ENCODE measurements at regions of chr1 and their contacts with region 1.

Region 1: GRCh38 chr1:151281969-151282882 is at the start of gene ZNF687:
- DNase-seq: peak; percentile 94 to 100 (median 97)
- ATAC-seq: peak; percentile 85
- H3K4me3 ChIP-seq: peak within 1 kb of the TSS; percentile 64
- H3K4me3 Mint-ChIP-seq: peak within 1 kb of the TSS; percentile 98
- H3K27ac ChIP-seq: peak within 1 kb of the TSS; percentile 92 to 95
- H3K27ac Mint-ChIP-seq: peak within 1 kb of the TSS; percentile 93
- H3K4me1 ChIP-seq: peaks cover 38% of the 10 kb centered on the region
- H3K4me1 Mint-ChIP-seq: peaks cover 42% of the 10 kb centered on the region
- H3K27me3 ChIP-seq: no peaks in the 10 kb centered on the region
- H3K27me3 Mint-ChIP-seq: no peaks in the 10 kb centered on the region
- CTCF ChIP-seq: no peak
- total RNA-seq, gene ZNF687: 38.9 to 40.0 TPM

Region 2: DNA sequence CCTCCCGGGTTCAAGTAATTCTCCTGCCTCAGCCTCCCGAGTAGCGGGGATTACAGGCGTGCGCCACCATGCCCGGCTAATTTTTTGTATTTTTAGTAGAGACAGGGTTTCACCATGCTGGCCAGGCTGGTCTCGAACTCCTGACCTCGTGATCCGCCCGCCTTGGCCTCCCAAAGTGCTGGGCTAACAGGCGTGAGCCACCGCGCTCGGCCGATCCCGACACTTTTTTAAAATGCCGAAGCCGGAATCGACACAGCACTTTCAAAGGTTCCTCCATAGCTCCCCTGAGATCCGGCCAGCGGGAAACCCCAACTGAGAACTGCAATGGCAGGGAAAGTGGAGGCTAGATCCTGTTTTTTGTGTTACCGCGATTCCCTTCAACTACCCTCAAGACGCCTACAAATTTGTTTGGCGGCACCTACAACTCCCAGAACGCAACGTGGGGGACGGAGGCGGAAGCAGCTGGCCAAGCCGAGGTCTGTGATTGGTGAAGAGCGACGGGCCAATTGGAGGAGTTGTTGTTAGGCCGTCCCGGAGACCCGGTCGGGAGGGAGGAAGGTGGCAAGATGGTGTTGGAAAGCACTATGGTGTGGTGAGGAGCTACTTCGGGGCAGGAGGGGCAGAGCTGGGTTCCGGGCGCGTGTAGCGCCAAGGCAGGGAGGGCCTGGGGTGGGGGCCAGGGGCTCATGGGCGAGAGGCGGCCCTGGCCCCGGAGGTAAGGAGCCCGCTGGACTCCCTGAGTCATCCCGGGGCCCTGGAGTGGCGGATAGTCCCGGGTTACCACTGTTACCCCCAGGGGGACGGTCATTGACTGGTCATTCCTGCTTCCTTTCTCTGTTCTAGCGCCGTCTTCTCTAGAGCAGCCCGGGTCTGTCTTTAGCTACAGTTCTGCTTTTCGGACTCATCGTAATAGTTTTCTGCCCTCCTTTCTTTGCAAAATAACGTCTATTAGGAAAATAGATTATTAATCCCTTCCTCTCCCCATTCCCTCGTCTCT is 27.7 kb before region 1 on chr1 and contains the start of gene PSMD4:
- CTCF ChIA-PET with region 1: interaction called, 8 read pairs
- POLR2A ChIA-PET with region 1: interaction called, 30 read pairs
- intact Hi-C with region 1: loop called in 1 of 2 experiments (anchors 1 kb)
- DNase-seq: peak; percentile 88 to 98 (median 92)
- ATAC-seq: peak; percentile 93
- H3K4me3 ChIP-seq: peak within 1 kb of the TSS; percentile 87
- H3K4me3 Mint-ChIP-seq: peak within 1 kb of the TSS; percentile 98
- H3K27ac ChIP-seq: peak within 1 kb of the TSS; percentile 55 to 67
- H3K27ac Mint-ChIP-seq: peak within 1 kb of the TSS; percentile 94
- H3K4me1 ChIP-seq: peaks cover 21% of the 10 kb centered on the region
- H3K4me1 Mint-ChIP-seq: peaks cover 36% of the 10 kb centered on the region
- H3K27me3 ChIP-seq: no peaks in the 10 kb centered on the region
- H3K27me3 Mint-ChIP-seq: peaks cover 4% of the 10 kb centered on the region
- CTCF ChIP-seq: no peak
- total RNA-seq, gene PSMD4: 57.2 TPM

Region 3: GRCh38 chr1:151327223-151327902 is 45.1 kb after region 1 on chr1 and contains the start of gene PI4KB:
- CTCF ChIA-PET with region 1: interaction called, 4 read pairs
- POLR2A ChIA-PET with region 1: interaction called, 54 read pairs
- intact Hi-C with region 1: loop called (anchors 1 to 5 kb)
- DNase-seq: peak; percentile 76 to 97 (median 85)
- ATAC-seq: peak; percentile 94
- H3K4me3 ChIP-seq: peak within 1 kb of the TSS; percentile 75
- H3K4me3 Mint-ChIP-seq: peak within 1 kb of the TSS; percentile 95
- H3K27ac ChIP-seq: peak within 1 kb of the TSS; percentile 84 to 96
- H3K27ac Mint-ChIP-seq: peak within 1 kb of the TSS; percentile 93
- H3K4me1 ChIP-seq: peaks cover 35% of the 10 kb centered on the region
- H3K4me1 Mint-ChIP-seq: peaks cover 33% of the 10 kb centered on the region
- H3K27me3 ChIP-seq: no peaks in the 10 kb centered on the region
- H3K27me3 Mint-ChIP-seq: no peaks in the 10 kb centered on the region
- CTCF ChIP-seq: no peak
- total RNA-seq, gene PI4KB: 50.2 to 51.0 TPM

Region 4: DNA sequence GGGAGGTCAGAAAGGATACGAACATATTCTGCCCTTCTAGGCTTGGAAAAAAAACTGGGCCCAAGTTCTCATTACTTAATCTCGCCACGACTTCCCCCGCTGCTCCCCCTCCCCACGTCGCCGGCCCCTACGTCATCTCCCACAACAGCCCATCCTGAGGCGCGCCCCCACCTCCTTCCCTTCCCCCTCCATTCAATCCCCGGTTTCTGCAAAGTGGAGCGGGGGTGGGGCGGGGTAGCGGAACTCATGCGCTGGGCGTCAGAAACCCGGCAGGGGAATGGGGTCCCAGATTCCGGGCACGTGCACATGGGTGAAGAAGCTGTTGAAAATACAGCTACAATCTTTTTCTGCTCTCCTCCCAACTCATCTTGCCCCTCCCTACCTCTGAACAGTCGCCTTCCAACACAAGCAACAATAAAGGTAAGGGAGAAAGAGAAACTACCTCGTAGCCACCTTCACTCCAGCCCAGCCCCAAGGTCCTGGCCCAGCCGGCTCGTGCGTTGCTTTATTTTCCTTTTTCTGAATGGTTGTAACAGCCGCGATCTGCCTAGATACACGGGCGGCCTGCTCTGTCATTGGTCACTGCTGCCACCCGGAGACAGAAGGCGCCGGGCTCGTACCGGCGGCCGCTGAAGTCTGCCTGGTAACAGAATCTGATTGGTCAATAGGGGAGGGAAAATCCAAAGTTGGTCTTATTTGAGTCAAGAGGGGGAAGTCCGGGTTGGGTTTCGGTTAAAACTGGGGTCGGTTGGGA is 64.7 kb after region 1 on chr1 and contains the start of gene RFX5:
- CTCF ChIA-PET with region 1: interaction called, 21 read pairs
- POLR2A ChIA-PET with region 1: interaction called, 11 read pairs
- intact Hi-C with region 1: no loop called
- DNase-seq: peak; percentile 85 to 99 (median 90)
- ATAC-seq: peak; percentile 93
- H3K4me3 ChIP-seq: peak within 1 kb of the TSS; percentile 81
- H3K4me3 Mint-ChIP-seq: peak within 1 kb of the TSS; percentile 94
- H3K27ac ChIP-seq: peak within 1 kb of the TSS; percentile 97 to 98
- H3K27ac Mint-ChIP-seq: peak within 1 kb of the TSS; percentile 94
- H3K4me1 ChIP-seq: peaks cover 33% of the 10 kb centered on the region
- H3K4me1 Mint-ChIP-seq: peaks cover 30% of the 10 kb centered on the region
- H3K27me3 ChIP-seq: no peaks in the 10 kb centered on the region
- H3K27me3 Mint-ChIP-seq: no peaks in the 10 kb centered on the region
- CTCF ChIP-seq: no peak
- total RNA-seq, gene RFX5: 62.0 to 65.7 TPM

Region 5: DNA sequence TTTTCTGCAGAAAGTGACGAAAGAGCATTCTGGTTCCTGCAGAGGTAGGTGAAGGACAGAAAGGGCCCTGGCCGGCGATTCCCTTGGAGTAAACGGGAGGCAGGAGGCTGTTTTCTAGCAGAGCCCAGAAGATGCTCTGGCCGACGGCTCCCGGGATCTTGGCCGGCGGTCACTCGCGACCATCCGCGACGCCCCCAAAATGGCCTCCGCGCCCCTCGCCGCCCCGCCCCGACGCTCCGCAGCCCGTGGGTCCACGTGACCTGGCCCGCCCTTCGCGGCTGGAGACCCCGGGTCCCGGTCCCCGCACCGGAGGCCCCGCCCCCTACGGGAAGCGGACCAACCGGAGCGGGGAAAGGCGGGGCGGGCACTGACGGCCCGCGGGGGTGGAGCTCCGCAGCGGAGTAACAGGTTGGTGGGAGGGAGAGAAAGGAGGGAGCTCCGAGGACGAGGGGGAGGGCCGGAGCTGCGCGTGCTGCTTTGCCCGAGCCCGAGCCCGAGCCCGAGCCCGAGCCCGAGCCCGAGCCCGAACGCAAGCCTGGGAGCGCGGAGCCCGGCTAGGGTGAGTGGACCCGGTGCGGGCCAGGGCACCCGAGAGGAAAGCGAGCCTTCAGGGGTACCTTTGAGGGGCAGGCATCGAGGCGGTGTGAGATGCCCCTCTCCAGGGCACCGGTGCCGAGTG is 228.9 kb after region 1 on chr1 and contains the start of gene CGN:
- CTCF ChIA-PET with region 1: no interaction called
- POLR2A ChIA-PET with region 1: no interaction called
- intact Hi-C with region 1: loop called in 1 of 2 experiments (anchors 2 kb)
- DNase-seq: peak; percentile 70 to 95 (median 84)
- ATAC-seq: peak; percentile 97
- H3K4me3 ChIP-seq: peak within 1 kb of the TSS; percentile 76
- H3K4me3 Mint-ChIP-seq: peak within 1 kb of the TSS; percentile 97
- H3K27ac ChIP-seq: peak within 1 kb of the TSS in 1 of 2 donors; percentile 6
- H3K27ac Mint-ChIP-seq: peak within 1 kb of the TSS; percentile 75
- H3K4me1 ChIP-seq: peaks cover 30% of the 10 kb centered on the region
- H3K4me1 Mint-ChIP-seq: peaks cover 32% of the 10 kb centered on the region
- H3K27me3 ChIP-seq: no peaks in the 10 kb centered on the region
- H3K27me3 Mint-ChIP-seq: no peaks in the 10 kb centered on the region
- CTCF ChIP-seq: no peak
- total RNA-seq, gene CGN: 0.08 to 0.28 TPM

Region 6: DNA sequence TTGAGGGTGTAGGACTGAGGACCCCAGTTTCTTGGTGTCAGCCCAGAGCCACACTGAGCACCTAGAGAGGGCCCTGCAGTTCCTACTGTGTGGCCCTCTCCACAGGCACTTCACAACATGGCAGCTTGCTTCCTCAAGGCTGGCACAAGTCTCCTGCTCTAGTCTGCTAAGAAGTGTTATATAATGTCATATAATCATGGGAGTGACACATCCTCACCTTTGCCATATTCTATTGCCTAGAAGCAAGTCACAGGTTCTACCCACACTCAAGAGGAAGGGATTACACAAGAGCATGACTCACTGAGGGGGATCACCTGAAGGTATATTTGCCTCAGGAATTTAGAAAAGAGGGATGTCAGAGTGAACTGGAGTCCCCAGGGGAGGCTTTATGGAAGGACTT is 324.2 kb after region 1 on chr1:
- CTCF ChIA-PET with region 1: no interaction called
- POLR2A ChIA-PET with region 1: no interaction called
- intact Hi-C with region 1: no loop called
- DNase-seq: peak in 2 of 14 experiments; percentile 17 to 23
- ATAC-seq: no peak
- H3K4me3 ChIP-seq: no peak overlapping the region
- H3K4me3 Mint-ChIP-seq: no peak overlapping the region
- H3K27ac ChIP-seq: no peak overlapping the region
- H3K27ac Mint-ChIP-seq: no peak overlapping the region
- H3K4me1 ChIP-seq: peaks cover 2% of the 10 kb centered on the region
- H3K4me1 Mint-ChIP-seq: peaks cover 2% of the 10 kb centered on the region
- H3K27me3 ChIP-seq: peaks cover 0 to 3% of the 10 kb centered on the region in 2 experiments
- H3K27me3 Mint-ChIP-seq: peaks cover 36% of the 10 kb centered on the region
- CTCF ChIP-seq: no peak

Measured in CD4-positive, alpha-beta T cell (primary cell).